ENCODE measurements at regions of chr7 and their contacts with region 1.

Region 1: DNA sequence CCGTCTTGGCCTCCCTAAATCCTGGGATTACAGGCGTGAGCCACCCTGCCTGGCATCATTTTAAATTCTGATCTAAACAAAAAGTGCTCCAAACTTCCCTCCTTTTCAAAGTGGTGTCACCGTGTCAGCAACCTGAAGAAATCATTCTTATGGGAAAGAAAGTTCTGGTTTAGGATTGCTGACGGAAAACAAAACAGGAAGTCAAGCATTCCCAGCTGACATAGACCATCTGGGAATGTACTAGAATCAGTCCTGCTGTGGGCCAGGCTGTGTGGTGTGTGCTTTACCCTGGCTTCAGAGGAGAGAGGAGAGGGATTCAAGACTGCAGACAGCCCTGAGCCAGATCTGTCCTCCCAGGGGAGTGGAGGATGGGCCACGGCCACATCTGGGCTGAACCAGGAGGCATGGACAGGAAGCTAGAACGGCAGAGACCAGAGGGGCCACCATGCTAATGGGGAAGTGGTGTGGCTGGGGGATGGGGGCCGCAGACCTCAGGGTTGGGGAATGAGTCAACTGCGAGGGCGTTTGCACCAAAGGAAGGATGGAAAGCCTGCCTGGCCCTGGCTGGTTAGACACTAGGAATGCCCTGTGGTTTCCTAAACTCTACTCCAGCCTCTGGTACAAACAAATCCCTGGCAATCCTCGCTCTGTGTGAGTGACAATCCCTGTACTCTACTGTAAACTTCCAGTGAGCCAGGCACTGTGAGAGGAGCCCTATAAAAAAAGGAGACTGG is 16.7 kb upstream of the CLIP2 start:
- DNase-seq: peak; percentile 97
- ATAC-seq: peak; percentile 92
- H3K4me3 ChIP-seq: no peak overlapping the region
- H3K27ac ChIP-seq: peak overlapping the region; percentile 84
- H3K4me1 ChIP-seq: peaks cover 7% of the 10 kb centered on the region
- H3K27me3 ChIP-seq: no peaks in the 10 kb centered on the region
- CTCF ChIP-seq: no peak
- POLR2A ChIP-seq: peak; percentile 60; the same call in 1 of the 2 replicates
- RAD21 ChIP-seq: no peak

Region 2: GRCh38 chr7:74254129-74254857 is 18.2 kb before region 1 on chr7 and contains the start of gene RFC2:
- CTCF ChIA-PET with region 1: no interaction called
- POLR2A ChIA-PET with region 1: interaction called, 11 read pairs
- dilution Hi-C with region 1: no loop called
- in situ Hi-C with region 1: no loop called
- intact Hi-C with region 1: no loop called
- DNase-seq: peak; percentile 94
- ATAC-seq: peak; percentile 97
- H3K4me3 ChIP-seq: peak within 1 kb of the TSS; percentile 73
- H3K27ac ChIP-seq: peak within 1 kb of the TSS; percentile 86
- H3K4me1 ChIP-seq: peaks cover 10% of the 10 kb centered on the region
- H3K27me3 ChIP-seq: no peaks in the 10 kb centered on the region
- CTCF ChIP-seq: 0 out of 2 replicates have a peak, but pooled peaks have one; percentile 23
- POLR2A ChIP-seq: peak; percentile 87
- RAD21 ChIP-seq: no peak; the same call in 1 of the 2 replicates
- total RNA-seq, gene RFC2: 33.9 and 37.8 TPM in 2 replicates

Region 3: DNA sequence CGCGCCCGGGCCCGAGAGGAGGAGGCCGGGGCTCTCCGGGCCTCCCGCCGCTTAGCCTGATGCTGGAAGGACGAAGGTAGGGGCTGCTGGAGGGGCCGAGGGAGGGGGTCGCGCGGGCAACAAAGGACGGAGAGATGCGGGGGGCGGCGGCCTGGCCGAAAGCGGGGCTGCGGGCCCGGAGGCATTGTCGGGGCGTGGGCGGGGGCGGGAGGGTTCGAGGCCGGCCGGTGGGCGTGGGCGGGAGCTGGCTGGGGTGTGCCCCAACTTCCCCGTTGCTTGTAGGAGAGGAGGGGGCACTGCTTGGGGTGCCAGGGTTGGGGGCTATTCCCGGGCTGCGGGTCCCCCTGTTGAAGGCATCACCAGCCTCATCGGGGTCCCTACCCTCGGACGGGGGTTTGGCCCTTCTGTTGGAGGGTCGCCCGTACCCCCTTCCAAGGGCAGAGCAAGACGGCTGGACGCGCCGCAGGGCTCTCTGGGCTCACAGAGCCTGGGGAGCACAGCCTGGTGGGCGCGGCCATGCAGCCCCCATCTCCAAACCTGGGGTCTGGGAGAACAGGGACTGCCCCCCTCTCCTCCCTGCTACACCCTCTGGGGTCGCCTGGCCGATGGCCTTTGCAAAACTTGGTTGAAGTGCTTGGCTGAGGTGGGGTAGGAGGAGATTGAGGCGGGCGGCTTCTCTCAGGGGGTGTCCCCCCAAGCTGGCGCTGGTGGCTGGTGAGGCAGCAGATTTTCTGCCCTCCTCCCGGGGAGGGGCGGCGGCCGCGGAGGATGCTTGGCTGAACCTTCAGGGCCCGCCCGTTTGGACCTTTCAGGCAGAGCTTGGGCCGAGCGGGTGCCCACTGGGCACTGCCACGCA is 17.4 kb after region 1 on chr7:
- CTCF ChIA-PET with region 1: no interaction called
- POLR2A ChIA-PET with region 1: no interaction called
- dilution Hi-C with region 1: no loop called
- in situ Hi-C with region 1: no loop called
- intact Hi-C with region 1: loop called (anchors 1 kb)
- DNase-seq: no peak
- ATAC-seq: peak; percentile 36
- H3K4me3 ChIP-seq: peak overlapping the region; percentile 96
- H3K27ac ChIP-seq: peak overlapping the region; percentile 89
- H3K4me1 ChIP-seq: peaks cover 29% of the 10 kb centered on the region
- H3K27me3 ChIP-seq: no peaks in the 10 kb centered on the region
- CTCF ChIP-seq: no peak
- POLR2A ChIP-seq: no peak
- RAD21 ChIP-seq: peak; percentile 3; the same call in 1 of the 2 replicates

Region 4: GRCh38 chr7:74483402-74484336 is 211.2 kb after region 1 on chr7:
- CTCF ChIA-PET with region 1: no interaction called
- POLR2A ChIA-PET with region 1: no interaction called
- dilution Hi-C with region 1: no loop called
- in situ Hi-C with region 1: no loop called
- intact Hi-C with region 1: no loop called
- DNase-seq: peak; percentile 67
- ATAC-seq: peak; percentile 6; the same call in 1 of the 2 replicates
- H3K4me3 ChIP-seq: no peak overlapping the region
- H3K27ac ChIP-seq: peak overlapping the region; percentile 95
- H3K4me1 ChIP-seq: peaks cover 44% of the 10 kb centered on the region
- H3K27me3 ChIP-seq: no peaks in the 10 kb centered on the region
- CTCF ChIP-seq: no peak
- POLR2A ChIP-seq: no peak
- RAD21 ChIP-seq: no peak